ENCODE measurements at regions of chr13 and their contacts with region 1.

Region 1: GRCh38 chr13:44373601-44374348 is at the start of gene SERP2:
- DNase-seq: peak; percentile 66 to 76
- ATAC-seq: peak; percentile 72
- H3K4me3 ChIP-seq: peak within 1 kb of the TSS; percentile 14 to 63
- H3K27ac ChIP-seq: peak within 1 kb of the TSS in 1 of 2 donors; percentile 36
- H3K4me1 ChIP-seq: no peaks in the 10 kb centered on the region
- H3K27me3 ChIP-seq: no peaks in the 10 kb centered on the region
- total RNA-seq, gene SERP2: 3.4 to 5.2 TPM

Region 2: DNA sequence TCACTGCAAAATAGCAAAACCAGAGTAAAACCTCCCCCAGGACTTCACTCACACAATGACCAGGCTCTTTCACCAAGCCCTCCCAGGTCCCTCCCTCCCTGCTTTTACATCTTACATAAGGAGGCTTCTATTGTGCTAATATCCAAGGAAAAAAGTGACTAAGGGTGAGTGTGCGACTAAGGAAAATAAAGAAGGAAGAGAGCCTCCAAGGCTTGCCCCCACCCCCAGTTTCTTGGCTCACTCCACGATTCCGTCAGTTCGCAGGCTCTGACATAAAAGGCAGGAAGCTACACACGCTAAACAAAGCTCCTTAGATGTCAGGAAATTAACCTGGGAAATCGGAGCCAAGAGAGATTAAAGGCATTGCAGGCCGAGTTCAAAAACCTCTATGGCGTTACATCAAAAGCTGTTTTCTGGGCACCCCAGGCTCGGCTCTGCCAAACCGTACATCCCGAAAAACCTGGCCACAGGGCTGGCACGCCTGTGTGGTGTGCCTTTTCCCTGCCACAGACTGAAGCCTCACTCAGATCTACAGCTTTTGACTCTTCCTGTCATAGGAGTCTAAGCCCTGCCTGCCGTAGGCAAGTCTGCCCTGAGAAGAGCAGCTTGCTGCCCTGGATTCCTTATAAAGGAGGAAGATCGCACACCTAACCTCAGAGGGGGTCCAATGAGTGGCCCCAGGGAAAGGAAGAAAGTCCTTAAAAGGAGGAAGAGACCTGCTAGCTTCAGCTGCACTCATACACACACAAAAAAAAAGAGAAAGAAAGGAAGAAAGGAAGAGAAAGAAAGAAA is 67.2 kb before region 1 on chr13:
- intact Hi-C with region 1: loop called in 1 of 2 experiments (anchors 5 kb)
- DNase-seq: peak; percentile 77 to 86
- ATAC-seq: peak; percentile 72
- H3K4me3 ChIP-seq: no peak overlapping the region
- H3K27ac ChIP-seq: peak overlapping the region; percentile 31 to 64
- H3K4me1 ChIP-seq: peaks cover 3 to 4% of the 10 kb centered on the region in 2 donors
- H3K27me3 ChIP-seq: no peaks in the 10 kb centered on the region

Measured in aorta (tissue), 5 donors.